ENCODE measurements at regions of chr15 and their contacts with region 1.

Region 1: DNA sequence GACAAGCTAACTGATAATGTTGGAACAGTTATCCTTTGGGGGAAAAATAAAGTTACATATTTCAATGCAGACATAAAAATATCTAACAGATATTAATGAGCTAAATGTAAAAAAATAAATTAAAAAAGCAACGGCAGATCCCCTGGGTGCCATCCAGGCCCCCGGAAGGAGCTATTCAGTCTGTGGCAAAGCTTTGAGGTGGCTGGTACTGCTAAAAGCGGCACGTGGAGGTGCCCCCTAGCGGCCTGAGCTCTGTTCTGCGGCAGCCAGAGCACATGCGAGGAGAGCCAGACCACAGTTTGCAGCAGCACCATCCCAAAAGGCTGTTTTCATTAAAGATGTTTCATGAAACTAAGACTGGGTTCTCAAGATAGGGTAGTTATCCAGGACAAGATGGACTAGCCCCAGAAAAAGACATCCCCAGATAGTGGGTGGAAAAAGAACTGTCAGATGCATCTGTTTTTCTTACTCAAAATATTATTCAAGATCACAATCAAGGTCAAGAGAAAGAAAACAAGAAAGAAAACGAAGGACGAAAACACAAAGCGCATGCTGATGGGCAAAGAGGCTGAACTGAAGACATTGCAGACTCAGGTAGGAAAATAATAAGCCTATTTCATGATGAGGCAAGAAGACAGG is 18.7 kb downstream of the AP3S2 start:
- DNase-seq: peak; percentile 85
- ATAC-seq: peak; percentile 96
- H3K4me3 Mint-ChIP-seq: no peak overlapping the region
- H3K27ac Mint-ChIP-seq: peak overlapping the region; percentile 17
- H3K4me1 Mint-ChIP-seq: no peaks in the 10 kb centered on the region
- H3K27me3 Mint-ChIP-seq: no peaks in the 10 kb centered on the region
- CTCF ChIP-seq: peak; percentile 82

Region 2: DNA sequence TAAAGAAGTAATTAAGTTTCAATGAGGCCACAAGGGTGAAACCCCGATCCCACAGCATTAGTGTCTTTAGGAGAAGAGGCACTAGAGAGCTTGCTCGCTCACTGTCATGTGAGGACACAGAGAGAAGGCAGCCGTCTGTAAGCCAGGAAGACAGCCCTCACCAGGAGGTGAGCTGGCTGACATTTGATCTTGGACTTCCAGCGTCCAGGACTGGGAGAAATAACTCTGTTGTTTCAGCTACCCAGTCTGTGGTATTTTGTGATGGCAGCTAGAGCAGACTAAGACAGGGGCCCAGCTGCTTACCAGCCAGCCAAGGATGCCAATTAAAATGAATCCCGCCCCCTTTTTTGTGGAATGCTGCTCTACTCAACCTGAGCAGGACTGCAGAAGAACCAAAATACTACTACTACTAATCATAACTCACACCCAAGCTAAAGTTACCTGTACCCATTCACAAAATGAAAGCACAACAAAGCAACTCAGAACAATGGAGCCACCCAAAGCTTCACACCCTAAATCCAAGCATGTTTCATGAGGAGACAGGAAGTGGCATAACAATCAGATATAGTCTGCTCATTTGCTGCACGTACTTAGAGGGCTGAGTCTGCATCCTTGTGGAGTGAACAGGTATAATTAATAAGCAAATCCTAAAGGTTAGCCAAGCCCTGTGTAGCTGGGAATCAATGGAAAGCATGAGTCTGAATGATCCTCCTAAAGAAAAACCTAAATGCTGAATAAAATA is 343.1 kb before region 1 on chr15:
- CTCF ChIA-PET with region 1: no interaction called
- POLR2A ChIA-PET with region 1: no interaction called
- DNase-seq: no peak
- ATAC-seq: peak; percentile 50
- H3K4me3 Mint-ChIP-seq: no peak overlapping the region
- H3K27ac Mint-ChIP-seq: no peak overlapping the region
- H3K4me1 Mint-ChIP-seq: peaks cover 7% of the 10 kb centered on the region
- H3K27me3 Mint-ChIP-seq: peaks cover 21% of the 10 kb centered on the region
- CTCF ChIP-seq: no peak

Region 3: DNA sequence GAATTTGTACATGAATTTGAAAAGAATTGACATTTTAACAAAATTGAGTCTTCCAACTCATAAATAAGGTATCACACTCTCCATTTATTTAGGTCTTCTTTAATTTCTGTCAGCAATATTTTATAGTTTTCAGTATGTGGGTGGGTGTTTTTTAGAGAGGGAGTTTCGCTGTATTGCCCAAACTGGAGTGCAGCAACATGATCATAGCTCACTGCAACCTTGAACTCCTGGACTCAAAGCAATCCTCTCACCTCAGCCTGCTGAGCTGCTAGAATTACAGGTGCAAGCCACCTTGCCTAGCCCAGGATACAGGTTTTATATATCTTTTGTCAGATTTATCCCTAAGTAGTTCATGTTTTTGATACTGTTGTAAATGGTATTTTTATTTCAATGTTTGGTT is 179.8 kb before region 1 on chr15:
- CTCF ChIA-PET with region 1: no interaction called
- POLR2A ChIA-PET with region 1: no interaction called
- DNase-seq: no peak
- ATAC-seq: no peak
- H3K4me3 Mint-ChIP-seq: no peak overlapping the region
- H3K27ac Mint-ChIP-seq: no peak overlapping the region
- H3K4me1 Mint-ChIP-seq: peaks cover 2% of the 10 kb centered on the region; the same call in 1 of the 2 replicates
- H3K27me3 Mint-ChIP-seq: peaks cover 37% of the 10 kb centered on the region
- CTCF ChIP-seq: no peak

Region 4: DNA sequence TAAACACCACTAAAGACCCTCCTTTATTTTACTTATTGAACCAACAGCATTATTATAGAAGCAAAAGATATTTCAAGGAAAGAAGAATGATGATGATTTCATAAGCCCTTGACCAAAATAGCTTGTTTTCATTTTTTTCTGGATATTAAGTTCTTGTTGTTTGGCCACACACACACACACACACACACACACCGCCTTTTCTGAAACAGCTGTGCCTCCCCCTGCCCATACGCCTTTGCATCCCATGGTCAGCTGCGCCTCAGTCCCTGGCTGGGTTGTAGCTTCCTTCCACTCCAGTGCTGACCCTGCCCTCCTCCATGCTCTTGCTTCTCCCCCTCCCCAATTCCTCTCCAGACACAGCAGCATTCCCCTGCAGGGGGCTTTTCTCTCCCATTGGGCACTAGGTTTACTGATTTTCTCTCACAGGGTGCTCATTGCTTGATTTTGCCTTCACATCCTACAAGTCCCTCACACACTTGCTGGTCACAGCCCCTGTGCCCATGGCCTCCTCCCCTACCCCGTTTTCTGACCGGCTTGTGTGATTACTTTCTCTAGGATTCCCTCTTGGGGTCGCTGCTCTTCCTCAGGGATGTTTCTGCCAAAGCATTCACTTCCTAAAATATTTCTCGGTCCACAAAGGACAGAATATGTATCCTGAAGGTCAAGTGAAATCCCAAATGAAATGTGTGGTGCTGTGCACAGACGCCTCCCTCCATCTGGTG is 142.4 kb before region 1 on chr15:
- CTCF ChIA-PET with region 1: interaction called, 19 read pairs
- POLR2A ChIA-PET with region 1: no interaction called
- DNase-seq: no peak
- ATAC-seq: peak; percentile 28
- H3K4me3 Mint-ChIP-seq: no peak overlapping the region
- H3K27ac Mint-ChIP-seq: no peak overlapping the region
- H3K4me1 Mint-ChIP-seq: no peaks in the 10 kb centered on the region
- H3K27me3 Mint-ChIP-seq: peaks cover 4% of the 10 kb centered on the region
- CTCF ChIP-seq: no peak

Region 5: GRCh38 chr15:89750560-89751542 is 124.2 kb before region 1 on chr15 and contains the start of gene MESP1:
- CTCF ChIA-PET with region 1: interaction called, 44 read pairs
- POLR2A ChIA-PET with region 1: no interaction called
- DNase-seq: peak; percentile 93
- ATAC-seq: peak; percentile 87
- H3K4me3 Mint-ChIP-seq: peak within 1 kb of the TSS; percentile 62
- H3K27ac Mint-ChIP-seq: no peak within 1 kb of the TSS
- H3K4me1 Mint-ChIP-seq: peaks cover 20% of the 10 kb centered on the region; the same call in 1 of the 2 replicates
- H3K27me3 Mint-ChIP-seq: peaks cover 40% of the 10 kb centered on the region
- CTCF ChIP-seq: no peak
- total RNA-seq, gene MESP1: 0.32 to 0.50 TPM (median 0.41 TPM) in 3 replicates

Region 6: DNA sequence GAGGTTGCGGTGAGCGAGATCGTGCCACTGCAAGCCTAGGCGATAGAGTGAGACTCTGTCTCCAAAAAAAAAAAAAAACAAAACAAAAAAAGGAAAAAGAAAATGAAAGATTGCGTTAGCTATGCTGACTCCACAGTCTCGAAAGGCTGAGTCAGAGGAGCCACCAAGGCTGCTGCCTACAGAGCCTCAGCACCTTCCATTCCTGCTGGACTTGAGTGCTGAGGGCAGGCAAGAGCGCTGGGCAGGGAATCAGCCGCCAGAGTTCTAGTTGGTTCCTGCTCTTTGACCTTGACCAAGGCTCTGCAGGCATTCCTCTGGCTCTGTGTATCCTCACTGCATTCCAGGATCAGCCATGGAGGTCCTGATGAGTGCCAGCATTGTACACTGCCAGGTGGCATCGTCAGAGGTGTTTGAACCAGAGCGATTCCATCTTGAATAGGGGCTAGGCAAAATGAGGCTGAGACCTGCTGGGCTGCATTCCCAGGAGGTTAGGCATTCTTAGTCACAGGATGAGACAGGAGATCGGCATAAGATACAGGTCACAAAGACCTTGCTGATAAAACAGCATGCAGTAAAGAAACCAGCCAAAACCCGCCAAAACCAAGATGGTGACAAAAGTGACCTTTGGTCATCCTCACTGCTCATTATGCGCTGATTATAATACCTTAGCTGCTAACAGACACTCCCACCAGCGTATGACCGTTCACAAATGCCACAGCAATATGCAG is 93.0 kb before region 1 on chr15:
- CTCF ChIA-PET with region 1: interaction called, 19 read pairs
- POLR2A ChIA-PET with region 1: no interaction called
- DNase-seq: no peak
- ATAC-seq: no peak
- H3K4me3 Mint-ChIP-seq: no peak overlapping the region
- H3K27ac Mint-ChIP-seq: no peak overlapping the region
- H3K4me1 Mint-ChIP-seq: peaks cover 25% of the 10 kb centered on the region
- H3K27me3 Mint-ChIP-seq: peaks cover 28% of the 10 kb centered on the region
- CTCF ChIP-seq: no peak

Region 7: GRCh38 chr15:89888214-89888804 is 13.3 kb after region 1 on chr15:
- CTCF ChIA-PET with region 1: interaction called, 25 read pairs
- POLR2A ChIA-PET with region 1: no interaction called
- DNase-seq: no peak
- ATAC-seq: peak; percentile 24; the same call in 1 of the 2 replicates
- H3K4me3 Mint-ChIP-seq: no peak overlapping the region
- H3K27ac Mint-ChIP-seq: no peak overlapping the region
- H3K4me1 Mint-ChIP-seq: peaks cover 6% of the 10 kb centered on the region
- H3K27me3 Mint-ChIP-seq: no peaks in the 10 kb centered on the region
- CTCF ChIP-seq: no peak

Region 8: GRCh38 chr15:89912674-89913396 is 37.8 kb after region 1 on chr15 and contains the start of gene ARPIN:
- CTCF ChIA-PET with region 1: interaction called, 11 read pairs
- POLR2A ChIA-PET with region 1: no interaction called
- DNase-seq: peak; percentile 72
- ATAC-seq: peak; percentile 80
- H3K4me3 Mint-ChIP-seq: peak within 1 kb of the TSS; percentile 72
- H3K27ac Mint-ChIP-seq: no peak within 1 kb of the TSS
- H3K4me1 Mint-ChIP-seq: peaks cover 12% of the 10 kb centered on the region
- H3K27me3 Mint-ChIP-seq: peaks cover 21% of the 10 kb centered on the region
- CTCF ChIP-seq: no peak
- total RNA-seq, gene ARPIN: 3.5 to 4.8 TPM (median 4.7 TPM) in 3 replicates

Region 9: GRCh38 chr15:89946781-89947221 is 71.8 kb after region 1 on chr15:
- CTCF ChIA-PET with region 1: no interaction called
- POLR2A ChIA-PET with region 1: no interaction called
- DNase-seq: no peak
- ATAC-seq: no peak
- H3K4me3 Mint-ChIP-seq: no peak overlapping the region
- H3K27ac Mint-ChIP-seq: no peak overlapping the region
- H3K4me1 Mint-ChIP-seq: no peaks in the 10 kb centered on the region
- H3K27me3 Mint-ChIP-seq: no peaks in the 10 kb centered on the region
- CTCF ChIP-seq: no peak